ENCODE measurements at regions of chr20 and their contacts with region 1.

Region 1: DNA sequence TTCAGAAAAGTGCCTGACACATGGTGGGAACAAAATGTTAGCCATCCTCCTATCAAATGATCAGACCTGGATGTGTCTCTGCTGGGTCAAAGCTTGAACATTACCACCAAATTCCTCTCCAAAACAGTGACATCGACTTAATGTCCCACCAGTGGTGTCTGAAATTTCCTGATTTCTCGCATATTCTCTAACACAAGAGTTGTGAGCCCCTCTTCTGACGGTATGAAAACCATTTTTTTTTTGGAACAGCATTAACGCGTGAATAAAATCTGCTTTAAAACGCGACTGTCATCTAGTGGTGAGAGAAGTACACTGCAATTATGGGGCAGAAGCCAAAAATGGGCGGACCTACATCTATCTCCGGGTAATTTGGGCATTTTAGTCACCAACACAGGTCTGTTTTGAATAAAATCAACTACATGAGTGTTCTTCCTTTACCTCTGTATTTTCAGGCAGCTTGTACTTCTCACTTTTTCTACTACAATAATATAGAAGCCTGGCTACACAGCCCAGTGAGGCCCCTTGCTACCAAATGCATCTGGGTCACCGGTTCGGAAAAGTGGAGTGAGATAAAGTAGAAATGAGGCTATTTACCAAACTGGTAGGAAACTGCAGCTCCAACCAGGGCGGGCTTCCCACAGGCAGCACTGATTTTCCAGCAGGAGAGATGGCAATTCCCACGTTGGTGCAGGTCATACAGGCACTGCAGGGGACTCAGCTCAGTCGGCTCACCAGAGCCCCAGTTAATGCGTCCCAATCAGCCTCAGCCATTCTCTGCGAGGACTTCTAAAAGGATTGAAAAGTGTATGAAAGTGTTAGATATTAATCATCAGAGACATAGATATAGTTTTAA is 27.4 kb downstream of the MGME1 start:
- DNase-seq: peak; percentile 58
- CTCF ChIP-seq: peak; percentile 91

Region 2: GRCh38 chr20:17946572-17947473 is 49.4 kb before region 1 on chr20:
- CTCF ChIA-PET with region 1: interaction called, 11 read pairs
- POLR2A ChIA-PET with region 1: no interaction called
- DNase-seq: no peak
- CTCF ChIP-seq: no peak

Region 3: GRCh38 chr20:17968366-17969279 is 27.6 kb before region 1 on chr20 and contains the starts of genes MGME1 and SNX5:
- CTCF ChIA-PET with region 1: interaction called, 21 read pairs
- POLR2A ChIA-PET with region 1: interaction called, 5 read pairs
- DNase-seq: peak; percentile 98
- CTCF ChIP-seq: no peak

Region 4: DNA sequence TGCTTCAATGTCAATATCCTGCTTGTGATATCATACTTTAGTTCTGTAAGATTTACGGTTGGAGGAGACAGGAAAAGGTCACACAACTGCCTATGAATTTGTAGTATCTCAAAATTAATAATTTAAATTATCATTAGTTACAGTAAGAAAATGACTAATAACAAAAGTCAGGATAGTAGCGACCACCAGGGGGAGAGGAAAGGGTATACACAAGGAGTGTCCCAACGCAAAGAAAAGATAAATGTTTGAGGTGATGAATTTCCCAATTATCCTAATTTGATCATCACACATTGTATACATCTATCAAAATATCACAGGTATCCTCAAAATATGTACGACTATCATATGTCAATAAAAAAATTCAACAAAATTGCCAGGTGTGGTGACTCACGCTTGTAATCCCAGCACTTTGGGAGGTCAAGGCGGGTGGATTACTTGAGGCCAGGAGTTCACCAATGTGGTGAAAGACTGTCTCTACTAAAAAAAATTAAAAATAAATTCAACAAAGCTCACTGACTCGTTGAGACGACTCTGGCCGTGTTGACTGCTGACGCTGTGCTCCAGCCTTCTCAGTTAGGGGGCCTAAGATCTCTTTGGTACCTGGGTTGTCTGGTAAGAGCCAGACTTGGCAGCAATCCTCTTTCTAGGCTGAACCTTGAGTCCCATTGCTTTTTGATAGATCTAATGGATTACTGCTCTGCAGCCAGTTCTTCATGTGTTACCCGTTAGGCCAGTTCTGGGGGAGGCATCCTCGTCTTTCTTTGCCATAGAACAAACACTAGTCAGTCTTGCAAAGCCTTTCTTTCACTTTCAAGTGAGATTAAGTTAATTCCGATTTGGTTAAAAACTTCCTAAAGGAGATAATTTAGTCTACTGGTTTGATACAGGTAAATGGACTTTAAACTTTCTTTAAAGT is 70.5 kb after region 1 on chr20:
- CTCF ChIA-PET with region 1: no interaction called
- POLR2A ChIA-PET with region 1: no interaction called
- DNase-seq: no peak
- CTCF ChIP-seq: no peak

Measured in GM10248 (cell line).